Panc1 (cell line): ENCODE measurements at regions of chr13 and their contacts with region 1.

Region 1: GRCh38 chr13:40259899-40260298 is 406.5 kb downstream of the FOXO1 start:
- DNase-seq: no peak
- ATAC-seq: no peak
- H3K4me3 ChIP-seq: no peak overlapping the region
- H3K27ac ChIP-seq: no peak overlapping the region
- H3K4me1 ChIP-seq: no peaks in the 10 kb centered on the region
- H3K27me3 ChIP-seq: no peaks in the 10 kb centered on the region
- CTCF ChIP-seq: no peak

Region 2: DNA sequence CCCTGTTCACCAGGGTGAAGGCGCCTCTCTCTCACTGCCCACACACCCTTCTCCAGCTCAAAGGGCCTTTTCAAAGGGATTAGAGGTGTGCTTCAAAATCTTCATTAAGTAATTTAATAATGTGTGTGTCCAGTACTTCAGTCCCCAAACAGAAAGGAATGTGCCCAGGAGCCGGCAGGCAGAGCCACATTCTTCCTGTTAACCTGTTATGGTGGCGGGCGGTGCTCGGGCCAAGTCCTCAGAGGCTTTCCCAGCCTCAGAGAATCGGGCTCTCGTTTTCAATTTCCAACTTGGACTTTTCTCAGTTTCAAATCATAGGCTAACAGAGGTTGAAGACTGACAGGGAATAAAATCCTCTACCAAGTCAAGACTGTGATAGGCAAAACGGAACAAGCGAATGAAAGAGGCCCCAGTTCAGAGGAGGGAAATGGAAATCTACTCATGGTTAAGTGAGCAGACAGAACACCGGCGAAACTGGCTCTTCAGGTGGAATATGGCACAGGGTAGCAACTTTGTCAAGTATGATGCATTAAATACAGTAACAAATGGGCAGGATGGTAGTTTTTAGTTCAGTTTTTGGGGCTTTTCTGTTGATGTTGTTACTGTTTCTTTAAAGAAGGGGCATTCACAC is 338.0 kb after region 1 on chr13:
- CTCF ChIA-PET with region 1: no interaction called
- POLR2A ChIA-PET with region 1: no interaction called
- in situ Hi-C with region 1: no loop called
- intact Hi-C with region 1: no loop called
- DNase-seq: no peak
- ATAC-seq: no peak
- H3K4me3 ChIP-seq: no peak overlapping the region
- H3K27ac ChIP-seq: no peak overlapping the region
- H3K4me1 ChIP-seq: no peaks in the 10 kb centered on the region
- H3K27me3 ChIP-seq: no peaks in the 10 kb centered on the region
- CTCF ChIP-seq: no peak

Region 3: DNA sequence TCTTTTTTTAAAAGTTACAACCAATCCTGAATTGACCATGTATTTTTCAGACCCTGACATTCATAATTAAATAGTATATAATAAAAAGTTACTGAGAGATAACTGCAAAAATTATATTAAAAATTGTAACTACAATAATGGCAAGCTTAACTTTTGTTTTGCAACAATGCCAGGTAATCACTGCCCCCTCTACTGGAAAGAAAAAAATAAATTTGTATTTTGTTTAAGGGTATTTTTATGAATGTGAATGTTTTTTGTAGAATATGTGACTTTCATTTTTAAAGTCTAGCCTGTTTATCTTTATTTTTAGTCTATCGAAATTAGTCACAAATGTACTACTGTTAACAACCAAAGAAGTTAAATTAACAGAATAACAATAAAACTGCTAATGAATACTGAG is 489.4 kb after region 1 on chr13:
- CTCF ChIA-PET with region 1: interaction called, 12 read pairs
- POLR2A ChIA-PET with region 1: no interaction called
- in situ Hi-C with region 1: no loop called
- intact Hi-C with region 1: no loop called
- DNase-seq: no peak
- ATAC-seq: no peak
- H3K4me3 ChIP-seq: no peak overlapping the region
- H3K27ac ChIP-seq: no peak overlapping the region
- H3K4me1 ChIP-seq: no peaks in the 10 kb centered on the region
- H3K27me3 ChIP-seq: no peaks in the 10 kb centered on the region
- CTCF ChIP-seq: no peak